Endothelial cell of umbilical vein (primary cell): ENCODE measurements at regions of chr17 and their contacts with region 1.

Region 1: GRCh38 chr17:62995377-62995885 is 29.4 kb downstream of the TANC2 start:
- DNase-seq: peak; percentile 45
- H3K4me3 ChIP-seq: no peak overlapping the region
- H3K27ac ChIP-seq: no peak overlapping the region
- H3K4me1 ChIP-seq: peaks cover 2% of the 10 kb centered on the region
- H3K27me3 ChIP-seq: no peaks in the 10 kb centered on the region
- CTCF ChIP-seq: peak; percentile 46 to 57
- POLR2A ChIP-seq: no peak

Region 2: DNA sequence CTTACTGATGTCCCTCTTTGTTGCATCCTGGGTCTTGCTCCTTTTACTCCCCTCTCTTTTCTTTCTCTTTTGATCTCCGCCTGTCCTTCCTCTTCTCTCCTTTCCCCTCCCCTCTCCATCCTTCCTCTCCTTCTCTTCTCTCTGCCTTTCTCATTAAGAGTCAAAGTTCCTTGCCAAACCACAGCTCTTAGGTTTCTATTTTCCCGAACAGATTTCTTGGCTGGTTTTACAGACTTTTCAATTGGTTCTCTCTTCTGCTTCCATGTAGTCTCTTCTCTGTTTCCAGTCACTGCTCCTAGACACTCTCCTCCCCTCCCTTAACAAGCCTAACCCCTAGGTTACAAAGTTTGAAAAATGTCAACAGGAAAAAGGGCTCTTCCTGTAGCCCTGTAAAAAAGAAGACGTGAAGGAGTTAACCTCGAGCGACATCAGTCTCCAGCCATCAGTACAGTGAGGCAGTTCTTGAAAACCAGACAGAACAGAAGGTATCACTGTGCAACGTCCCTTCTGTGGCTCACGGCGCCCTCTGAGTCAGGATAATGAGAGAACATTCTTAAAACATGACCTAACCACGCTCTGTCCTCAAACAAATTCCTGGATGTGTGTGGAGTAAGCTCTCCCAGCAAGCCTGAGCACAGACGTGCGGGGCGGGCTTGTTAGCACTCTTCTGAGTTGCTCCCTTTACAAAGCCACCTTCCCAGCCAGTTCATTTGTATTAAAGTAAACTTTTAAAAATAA is 175.8 kb before region 1 on chr17:
- CTCF ChIA-PET with region 1: no interaction called
- POLR2A ChIA-PET with region 1: no interaction called
- dilution Hi-C with region 1: no loop called
- intact Hi-C with region 1: no loop called
- DNase-seq: peak; percentile 90
- H3K4me3 ChIP-seq: peak overlapping the region in 1 of 3 experiments; percentile 25
- H3K27ac ChIP-seq: peak overlapping the region; percentile 85
- H3K4me1 ChIP-seq: peaks cover 33% of the 10 kb centered on the region
- H3K27me3 ChIP-seq: no peaks in the 10 kb centered on the region
- CTCF ChIP-seq: no peak
- POLR2A ChIP-seq: no peak

Region 3: GRCh38 chr17:62981928-62982327 is 13.5 kb before region 1 on chr17:
- CTCF ChIA-PET with region 1: interaction called, 27 read pairs
- POLR2A ChIA-PET with region 1: no interaction called
- dilution Hi-C with region 1: no loop called
- intact Hi-C with region 1: no loop called
- DNase-seq: no peak
- H3K4me3 ChIP-seq: no peak overlapping the region
- H3K27ac ChIP-seq: no peak overlapping the region
- H3K4me1 ChIP-seq: peaks cover 3% of the 10 kb centered on the region
- H3K27me3 ChIP-seq: no peaks in the 10 kb centered on the region
- CTCF ChIP-seq: no peak
- POLR2A ChIP-seq: no peak

Region 4: GRCh38 chr17:63075969-63076368 is 80.5 kb after region 1 on chr17:
- CTCF ChIA-PET with region 1: interaction called, 31 read pairs
- POLR2A ChIA-PET with region 1: no interaction called
- dilution Hi-C with region 1: no loop called
- intact Hi-C with region 1: no loop called
- DNase-seq: no peak
- H3K4me3 ChIP-seq: no peak overlapping the region
- H3K27ac ChIP-seq: no peak overlapping the region
- H3K4me1 ChIP-seq: no peaks in the 10 kb centered on the region
- H3K27me3 ChIP-seq: no peaks in the 10 kb centered on the region
- CTCF ChIP-seq: no peak
- POLR2A ChIP-seq: no peak